ENCODE measurements at regions of chr17 and their contacts with region 1.

Region 1: GRCh38 chr17:74118504-74118903 is 85.0 kb upstream of the RPL38 start:
- DNase-seq: no peak
- ATAC-seq: no peak
- H3K4me3 ChIP-seq: no peak overlapping the region
- H3K27ac ChIP-seq: no peak overlapping the region
- H3K4me1 ChIP-seq: no peaks in the 10 kb centered on the region
- H3K27me3 ChIP-seq: no peaks in the 10 kb centered on the region
- CTCF ChIP-seq: no peak
- POLR2A ChIP-seq: no peak
- RAD21 ChIP-seq: no peak

Region 2: GRCh38 chr17:73956669-73957465 is 161.6 kb before region 1 on chr17:
- CTCF ChIA-PET with region 1: no interaction called
- POLR2A ChIA-PET with region 1: no interaction called
- dilution Hi-C with region 1: no loop called
- in situ Hi-C with region 1: loop called (anchors 25 kb)
- intact Hi-C with region 1: no loop called
- DNase-seq: no peak
- ATAC-seq: no peak
- H3K4me3 ChIP-seq: no peak overlapping the region
- H3K27ac ChIP-seq: no peak overlapping the region
- H3K4me1 ChIP-seq: no peaks in the 10 kb centered on the region
- H3K27me3 ChIP-seq: no peaks in the 10 kb centered on the region
- CTCF ChIP-seq: no peak
- POLR2A ChIP-seq: no peak
- RAD21 ChIP-seq: no peak